Activated CD4-positive, alpha-beta memory T cell treated with anti-CD3 and anti-CD28 coated beads for 36 hours (primary cell): ENCODE measurements at regions of chr1 and their contacts with region 1.

Region 1: GRCh38 chr1:8727809-8728213 is 89.6 kb downstream of the RERE start:
- DNase-seq: no peak
- H3K4me3 Mint-ChIP-seq: no peak overlapping the region
- H3K27ac Mint-ChIP-seq: no peak overlapping the region
- H3K4me1 Mint-ChIP-seq: peaks cover 14% of the 10 kb centered on the region
- H3K27me3 Mint-ChIP-seq: no peaks in the 10 kb centered on the region

Region 2: DNA sequence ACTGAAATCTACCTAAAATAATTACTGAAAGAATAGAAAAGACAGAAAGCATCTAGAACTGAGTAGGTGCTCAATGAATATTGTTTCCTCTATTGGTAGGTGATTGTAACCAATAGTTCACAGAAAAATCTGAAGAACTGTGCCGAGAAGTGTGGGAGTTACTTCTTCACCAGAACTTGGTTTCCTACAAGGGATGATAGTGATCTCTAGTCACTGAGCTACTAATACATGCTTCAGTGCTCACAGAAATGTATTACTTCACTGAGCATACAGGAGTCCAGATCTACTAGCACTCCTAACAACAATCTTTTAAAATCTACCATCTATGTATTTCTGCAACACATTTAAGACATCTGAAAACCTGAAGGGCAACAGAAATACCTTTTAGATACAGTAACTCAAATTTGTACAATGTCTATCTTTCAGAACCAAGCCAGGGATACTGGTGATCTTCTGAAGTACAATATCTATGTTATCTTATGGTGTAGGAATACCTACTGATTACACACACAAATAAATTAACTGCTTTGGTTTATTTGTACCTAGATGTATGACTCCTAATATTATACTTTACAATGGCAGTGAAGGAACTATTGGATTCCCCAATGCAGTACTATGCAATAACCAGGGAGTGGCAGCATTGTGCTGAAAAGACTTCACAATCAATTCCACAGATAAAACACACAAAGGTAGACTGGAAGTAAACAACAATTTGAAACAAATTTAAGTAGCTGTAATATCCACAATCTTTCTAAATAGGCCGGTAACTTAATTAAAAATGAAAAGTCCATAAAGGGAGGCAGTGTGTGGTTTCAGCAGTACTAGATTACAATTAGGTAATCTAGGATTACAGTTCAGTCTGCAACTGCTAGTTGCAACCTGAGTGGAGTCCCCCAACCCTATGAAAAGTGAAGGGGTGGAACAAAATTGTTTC is 166.9 kb before region 1 on chr1:
- CTCF ChIA-PET with region 1: interaction called, 127 read pairs
- POLR2A ChIA-PET with region 1: no interaction called
- intact Hi-C with region 1: loop called (anchors 1 kb)
- DNase-seq: no peak
- H3K4me3 Mint-ChIP-seq: no peak overlapping the region
- H3K27ac Mint-ChIP-seq: peak overlapping the region; percentile 50
- H3K4me1 Mint-ChIP-seq: peaks cover 41% of the 10 kb centered on the region
- H3K27me3 Mint-ChIP-seq: no peaks in the 10 kb centered on the region

Region 3: DNA sequence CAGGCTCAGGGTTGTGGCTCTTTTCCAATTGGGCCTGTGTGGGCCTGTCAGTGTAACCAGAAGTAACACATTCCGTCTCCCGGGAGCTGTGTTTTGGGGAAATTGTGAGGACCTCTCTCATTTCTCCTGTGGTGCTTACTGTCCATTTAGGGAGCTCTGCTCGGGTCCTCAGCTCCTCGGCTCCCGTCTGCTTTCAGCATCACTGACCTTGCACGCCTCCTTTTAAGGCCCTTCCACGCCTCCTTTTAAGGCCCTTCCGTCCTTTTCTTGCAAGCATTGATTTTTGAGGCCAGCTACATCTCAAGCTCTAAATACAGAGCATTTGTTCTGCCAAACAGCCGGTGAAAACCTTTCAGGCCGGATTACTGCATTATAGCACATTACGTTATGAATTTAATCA is 227.6 kb after region 1 on chr1:
- CTCF ChIA-PET with region 1: no interaction called
- POLR2A ChIA-PET with region 1: no interaction called
- intact Hi-C with region 1: no loop called
- DNase-seq: no peak
- H3K4me3 Mint-ChIP-seq: no peak overlapping the region
- H3K27ac Mint-ChIP-seq: no peak overlapping the region
- H3K4me1 Mint-ChIP-seq: peaks cover 13% of the 10 kb centered on the region
- H3K27me3 Mint-ChIP-seq: no peaks in the 10 kb centered on the region

Region 4: GRCh38 chr1:9010781-9011323 is 283.0 kb after region 1 on chr1:
- CTCF ChIA-PET with region 1: no interaction called
- POLR2A ChIA-PET with region 1: no interaction called
- intact Hi-C with region 1: no loop called
- DNase-seq: no peak
- H3K4me3 Mint-ChIP-seq: no peak overlapping the region
- H3K27ac Mint-ChIP-seq: no peak overlapping the region
- H3K4me1 Mint-ChIP-seq: no peaks in the 10 kb centered on the region
- H3K27me3 Mint-ChIP-seq: peaks cover 1% of the 10 kb centered on the region